ENCODE measurements at regions of chr15 and their contacts with region 1.

Region 1: DNA sequence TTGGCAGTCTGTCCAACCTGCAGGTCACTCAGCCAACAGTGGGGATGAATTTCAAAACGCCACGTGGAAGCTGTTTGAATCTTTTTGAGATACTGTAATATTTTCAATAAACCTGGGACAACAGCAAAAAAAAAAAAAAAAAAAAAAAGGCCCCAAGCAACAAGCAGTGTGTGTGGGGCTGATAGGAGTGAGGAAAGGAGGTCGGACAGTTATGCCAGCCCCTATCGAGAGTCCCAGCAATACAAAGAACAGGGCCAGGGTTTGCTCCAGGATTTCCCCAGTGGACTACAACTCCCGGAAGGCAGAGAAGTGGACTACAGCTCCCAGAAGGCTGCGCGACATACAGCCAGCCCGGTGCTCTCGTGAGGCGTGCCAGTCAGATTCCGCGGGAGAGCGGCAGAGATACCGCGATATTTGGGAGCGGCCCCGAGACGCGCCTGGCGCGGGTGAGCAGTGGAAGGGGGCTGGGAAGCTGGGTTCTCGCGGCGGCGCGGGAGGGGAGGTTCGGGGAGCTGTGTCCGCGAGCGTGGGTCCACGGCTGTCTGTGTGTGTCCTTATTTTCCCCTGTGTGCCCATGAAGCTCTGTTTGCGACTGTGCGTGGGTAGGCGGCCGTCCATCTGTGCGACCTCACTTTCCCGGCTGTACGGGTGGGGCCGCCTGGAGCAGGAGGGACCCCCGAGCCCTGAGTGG is at the start of gene PPCDC:
- H3K4me3 Mint-ChIP-seq: peak within 1 kb of the TSS; percentile 82
- H3K27ac Mint-ChIP-seq: peak within 1 kb of the TSS; percentile 93
- H3K4me1 Mint-ChIP-seq: peaks cover 63% of the 10 kb centered on the region
- H3K27me3 Mint-ChIP-seq: no peaks in the 10 kb centered on the region

Region 2: DNA sequence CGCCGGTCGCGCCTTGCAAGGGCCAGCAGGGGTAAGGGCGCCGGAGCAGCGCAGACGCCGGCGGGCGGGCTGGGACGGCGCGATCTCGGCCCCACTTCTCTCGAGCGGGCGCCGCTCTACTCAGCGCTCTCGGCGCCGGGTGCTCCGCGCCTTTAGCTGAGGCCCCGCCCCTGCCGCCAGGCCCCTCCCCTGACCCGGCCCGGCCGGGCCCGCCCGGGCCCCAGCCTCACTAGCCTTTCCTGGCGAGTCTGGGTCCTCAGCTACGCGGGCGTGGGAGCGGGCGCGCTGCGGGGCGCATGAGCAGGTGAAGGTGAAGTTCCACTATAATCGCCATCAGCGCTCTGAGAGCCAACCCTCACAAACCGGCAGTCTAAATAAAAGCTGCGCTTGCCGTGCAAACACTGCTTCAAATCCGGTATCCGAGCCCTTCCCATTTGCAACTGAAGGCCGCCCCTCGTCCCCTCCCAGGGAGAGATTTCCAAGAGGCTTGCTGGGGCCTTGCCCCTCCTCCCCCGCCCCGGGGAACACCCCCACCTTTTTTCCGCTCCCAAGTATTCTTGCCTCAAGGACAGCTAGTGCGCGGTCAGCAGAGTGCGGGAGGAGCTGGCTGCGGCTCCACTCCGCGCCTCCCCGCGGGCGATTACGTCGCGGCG is 66.6 kb before region 1 on chr15 and contains the start of gene RPP25:
- intact Hi-C with region 1: loop called (anchors 10 kb)
- H3K4me3 Mint-ChIP-seq: peak within 1 kb of the TSS; percentile 74
- H3K27ac Mint-ChIP-seq: peak within 1 kb of the TSS; percentile 71
- H3K4me1 Mint-ChIP-seq: peaks cover 49% of the 10 kb centered on the region
- H3K27me3 Mint-ChIP-seq: peaks cover 63% of the 10 kb centered on the region

Region 3: DNA sequence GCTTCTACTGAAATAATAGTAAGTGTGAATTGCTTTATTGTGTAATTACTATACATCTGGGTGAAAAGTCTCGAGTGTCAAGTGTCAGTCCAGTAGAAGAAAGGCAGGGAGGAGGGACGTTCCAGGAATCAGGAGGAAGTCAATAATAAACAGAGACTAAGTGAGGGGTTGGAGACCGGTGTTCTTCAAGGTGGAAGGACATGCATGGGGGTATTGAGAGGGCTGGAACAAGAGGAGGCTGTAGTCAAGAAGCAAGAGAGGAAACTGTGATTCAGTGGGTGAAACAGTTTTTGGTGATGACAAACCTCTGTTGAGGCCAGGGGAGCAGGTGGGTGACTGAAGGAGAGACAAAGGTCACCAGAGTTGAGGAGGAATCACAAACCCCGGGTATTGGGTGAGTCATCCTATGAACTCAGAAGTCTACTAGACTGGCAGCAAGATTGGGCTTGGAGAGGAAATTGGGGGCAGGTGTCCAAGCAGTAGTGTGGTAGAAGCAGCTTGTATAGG is 39.5 kb before region 1 on chr15:
- intact Hi-C with region 1: no loop called
- H3K4me3 Mint-ChIP-seq: no peak overlapping the region
- H3K27ac Mint-ChIP-seq: no peak overlapping the region
- H3K4me1 Mint-ChIP-seq: peaks cover 7% of the 10 kb centered on the region
- H3K27me3 Mint-ChIP-seq: peaks cover 28% of the 10 kb centered on the region

Region 4: DNA sequence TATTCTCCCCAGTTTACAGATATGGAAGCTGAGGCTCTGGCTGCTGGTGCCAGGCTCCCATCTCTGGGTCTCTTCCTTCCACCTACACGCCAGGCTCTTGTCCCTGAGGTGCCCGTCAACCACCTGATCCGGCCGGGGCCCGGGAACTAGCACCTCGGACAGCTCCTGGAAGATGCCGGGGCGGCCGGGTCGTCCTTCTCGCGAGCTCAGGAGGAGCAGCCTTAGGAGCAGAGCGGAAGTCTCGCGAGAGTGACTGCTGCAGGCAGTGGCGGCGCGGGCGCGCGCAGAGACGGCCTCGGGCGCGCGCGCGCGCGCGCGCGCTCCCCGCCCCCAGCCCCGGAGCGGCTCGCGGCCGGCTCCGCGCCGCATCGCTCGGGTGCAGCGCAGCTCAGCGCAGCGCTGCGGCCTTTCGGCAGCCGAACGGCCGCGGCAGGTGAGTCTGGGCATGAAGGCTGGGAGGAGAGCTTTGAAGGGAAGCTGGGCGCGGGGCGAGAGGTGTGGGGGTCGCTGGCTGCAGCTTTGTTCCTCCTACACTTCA is 28.0 kb before region 1 on chr15 and contains the start of gene SCAMP5:
- intact Hi-C with region 1: loop called (anchors 1 kb)
- H3K4me3 Mint-ChIP-seq: peak within 1 kb of the TSS; percentile 53
- H3K27ac Mint-ChIP-seq: no peak within 1 kb of the TSS
- H3K4me1 Mint-ChIP-seq: peaks cover 23% of the 10 kb centered on the region
- H3K27me3 Mint-ChIP-seq: peaks cover 45% of the 10 kb centered on the region